ENCODE measurements at regions of chr1 and their contacts with region 1.

Region 1: GRCh38 chr1:219660666-219661463 is 48.0 kb upstream of the ZC3H11B start:
- DNase-seq: peak; percentile 46 to 94 (median 91)
- H3K4me3 ChIP-seq: peak overlapping the region in 58 of 59 donors; percentile 3 to 62 (median 40)
- H3K27ac ChIP-seq: peak overlapping the region; percentile 11 to 93 (median 81)
- H3K27me3 ChIP-seq: no peaks in the 10 kb centered on the region
- CTCF ChIP-seq: peak; percentile 64 to 95 (median 87)

Region 2: DNA sequence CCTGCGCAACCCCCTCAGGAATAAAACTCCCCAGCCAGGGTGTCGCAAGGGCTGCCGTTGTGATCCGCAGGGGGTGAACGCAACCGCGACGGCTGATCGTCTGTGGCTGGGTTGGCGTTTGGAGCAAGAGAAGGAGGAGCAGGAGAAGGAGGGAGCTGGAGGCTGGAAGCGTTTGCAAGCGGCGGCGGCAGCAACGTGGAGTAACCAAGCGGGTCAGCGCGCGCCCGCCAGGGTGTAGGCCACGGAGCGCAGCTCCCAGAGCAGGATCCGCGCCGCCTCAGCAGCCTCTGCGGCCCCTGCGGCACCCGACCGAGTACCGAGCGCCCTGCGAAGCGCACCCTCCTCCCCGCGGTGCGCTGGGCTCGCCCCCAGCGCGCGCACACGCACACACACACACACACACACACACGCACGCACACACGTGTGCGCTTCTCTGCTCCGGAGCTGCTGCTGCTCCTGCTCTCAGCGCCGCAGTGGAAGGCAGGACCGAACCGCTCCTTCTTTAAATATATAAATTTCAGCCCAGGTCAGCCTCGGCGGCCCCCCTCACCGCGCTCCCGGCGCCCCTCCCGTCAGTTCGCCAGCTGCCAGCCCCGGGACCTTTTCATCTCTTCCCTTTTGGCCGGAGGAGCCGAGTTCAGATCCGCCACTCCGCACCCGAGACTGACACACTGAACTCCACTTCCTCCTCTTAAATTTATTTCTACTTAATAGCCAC is 1315.0 kb before region 1 on chr1:
- intact Hi-C with region 1: loop called in 1 of 2 experiments (anchors 10 kb)
- DNase-seq: peak in 6 of 10 donors; percentile 32 to 75 (median 66)
- H3K4me3 ChIP-seq: peak overlapping the region; percentile 52 to 87 (median 71)
- H3K27ac ChIP-seq: peak overlapping the region in 58 of 59 donors; percentile 33 to 92 (median 84)
- H3K27me3 ChIP-seq: no peaks in the 10 kb centered on the region
- CTCF ChIP-seq: peak in 1 of 56 donors; percentile 9

Region 3: DNA sequence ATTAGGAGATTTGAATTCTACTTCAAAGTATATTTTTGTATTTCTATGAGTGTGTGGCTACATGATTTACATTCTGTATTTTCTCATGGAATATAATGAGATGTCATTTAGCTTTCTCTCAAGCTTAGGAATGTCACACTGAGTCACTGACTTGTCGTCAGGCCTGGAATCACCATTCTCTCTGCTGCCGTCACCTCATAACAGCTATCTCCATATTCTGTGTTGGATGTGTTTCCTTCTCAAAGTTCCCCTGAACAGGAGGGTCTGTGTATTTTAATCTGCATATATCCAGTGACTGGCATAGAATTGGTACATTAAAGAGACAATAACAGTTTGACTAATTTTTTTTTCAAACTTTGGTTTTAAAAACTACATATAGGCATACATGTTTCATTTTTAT is 451.3 kb before region 1 on chr1:
- intact Hi-C with region 1: loop called in 1 of 2 experiments (anchors 10 kb)
- DNase-seq: no peak
- H3K4me3 ChIP-seq: no peak overlapping the region
- H3K27ac ChIP-seq: no peak overlapping the region
- H3K27me3 ChIP-seq: no peaks in the 10 kb centered on the region
- CTCF ChIP-seq: no peak

Region 4: DNA sequence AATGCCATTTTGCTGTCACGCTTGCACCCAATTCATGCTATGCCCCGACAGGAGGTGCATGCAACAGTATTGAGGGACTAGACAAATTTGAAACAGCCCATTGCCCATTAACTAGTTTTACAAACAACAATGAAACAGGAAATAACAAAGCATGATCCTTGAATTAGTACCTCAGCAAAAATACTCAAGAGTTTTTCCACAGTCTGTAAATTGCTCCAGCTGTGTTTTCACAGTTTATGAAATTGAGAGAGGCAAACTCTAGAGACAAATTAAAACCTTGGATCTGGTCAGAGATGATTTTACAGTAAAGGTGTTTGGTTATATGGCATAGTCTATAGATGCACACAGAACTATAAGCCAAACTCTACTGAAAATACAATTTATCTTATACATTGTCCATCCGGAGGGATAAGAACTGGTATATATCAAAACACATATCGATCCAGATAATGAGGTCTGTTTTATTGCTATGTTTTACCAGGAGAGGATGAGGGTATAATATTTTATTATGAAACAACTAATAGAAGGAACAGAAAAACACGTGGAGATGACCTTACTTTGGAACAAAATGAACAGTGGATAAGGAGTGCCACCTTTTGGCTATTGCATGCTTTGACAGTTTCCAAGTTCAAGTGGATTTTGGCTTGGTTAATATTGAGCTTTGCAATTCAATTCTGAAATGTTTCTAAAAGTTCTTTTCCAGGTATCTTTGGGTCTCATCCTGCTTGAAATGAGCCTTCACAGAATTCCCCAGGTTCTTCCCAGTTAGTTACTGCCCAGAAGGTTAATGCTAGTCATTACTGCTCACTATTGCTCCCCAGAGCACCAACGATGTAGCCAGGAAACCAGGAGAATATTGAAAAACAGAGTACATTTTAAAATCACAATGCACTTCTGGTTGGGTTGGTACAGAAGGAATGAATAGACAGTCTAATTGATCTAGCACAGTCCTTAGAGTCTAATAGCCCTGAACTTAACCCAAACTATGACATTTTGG is 93.6 kb before region 1 on chr1:
- intact Hi-C with region 1: loop called in 1 of 2 experiments (anchors 5 kb)
- DNase-seq: no peak
- H3K4me3 ChIP-seq: no peak overlapping the region
- H3K27ac ChIP-seq: no peak overlapping the region
- H3K27me3 ChIP-seq: peaks cover 0 to 3% (median 0%) of the 10 kb centered on the region in 45 donors
- CTCF ChIP-seq: peak; percentile 14 to 77 (median 61)

Region 5: DNA sequence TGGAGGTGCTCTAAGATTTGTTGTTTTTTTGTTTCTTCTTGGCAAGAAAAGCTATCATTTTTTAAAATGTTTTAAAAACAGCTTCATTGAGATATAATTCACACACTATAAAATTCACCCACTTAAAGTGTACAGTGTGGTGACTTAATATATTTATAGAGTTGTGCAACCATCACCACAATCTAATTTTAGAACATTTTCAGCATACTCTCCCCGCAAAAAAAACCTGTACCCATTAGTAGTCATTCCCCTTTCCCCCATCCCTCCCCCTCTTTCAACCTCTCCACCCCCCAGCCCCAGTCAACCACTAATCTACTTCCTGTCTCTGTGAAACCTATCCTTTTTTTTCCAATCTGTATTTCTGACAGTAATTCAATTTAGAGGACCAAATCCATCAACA is 78.6 kb before region 1 on chr1:
- intact Hi-C with region 1: no loop called
- DNase-seq: no peak
- H3K4me3 ChIP-seq: no peak overlapping the region
- H3K27ac ChIP-seq: no peak overlapping the region
- H3K27me3 ChIP-seq: no peaks in the 10 kb centered on the region
- CTCF ChIP-seq: no peak

Measured in dorsolateral prefrontal cortex (tissue), 120 donors.